GM12878 (cell line): ENCODE measurements at regions of chr13 and their contacts with region 1.

Region 1: GRCh38 chr13:46052319-46053161 is at the start of gene ZC3H13:
- DNase-seq: peak; percentile 69
- ATAC-seq: peak; percentile 97
- H3K4me3 ChIP-seq: peak within 1 kb of the TSS; percentile 95
- H3K27ac ChIP-seq: peak within 1 kb of the TSS; percentile 91
- H3K4me1 ChIP-seq: no peaks in the 10 kb centered on the region
- H3K27me3 ChIP-seq: no peaks in the 10 kb centered on the region
- CTCF ChIP-seq: peak; percentile 13 to 34 (median 32); a peak in 4 of 6 replicates
- EP300 ChIP-seq: no peak
- POLR2A ChIP-seq: peak; percentile 91
- RAD21 ChIP-seq: no peak; the same call in 1 of the 2 replicates
- polyA plus RNA-seq, gene ZC3H13: 18.7 to 23.4 TPM

Region 2: GRCh38 chr13:45915686-45916439 is 136.7 kb before region 1 on chr13:
- CTCF ChIA-PET with region 1: no interaction called
- POLR2A ChIA-PET with region 1: no interaction called
- RAD21 ChIA-PET with region 1: no interaction called
- SMC1A ChIA-PET with region 1: no interaction called
- in situ Hi-C with region 1: no loop called
- intact Hi-C with region 1: no loop called
- DNase-seq: no peak
- ATAC-seq: no peak
- H3K4me3 ChIP-seq: no peak overlapping the region
- H3K27ac ChIP-seq: no peak overlapping the region
- H3K4me1 ChIP-seq: no peaks in the 10 kb centered on the region
- H3K27me3 ChIP-seq: peaks cover 0 to 2% of the 10 kb centered on the region in 2 experiments; a peak in 2 of 4 replicates
- CTCF ChIP-seq: no peak
- EP300 ChIP-seq: no peak
- POLR2A ChIP-seq: no peak
- RAD21 ChIP-seq: no peak

Region 3: DNA sequence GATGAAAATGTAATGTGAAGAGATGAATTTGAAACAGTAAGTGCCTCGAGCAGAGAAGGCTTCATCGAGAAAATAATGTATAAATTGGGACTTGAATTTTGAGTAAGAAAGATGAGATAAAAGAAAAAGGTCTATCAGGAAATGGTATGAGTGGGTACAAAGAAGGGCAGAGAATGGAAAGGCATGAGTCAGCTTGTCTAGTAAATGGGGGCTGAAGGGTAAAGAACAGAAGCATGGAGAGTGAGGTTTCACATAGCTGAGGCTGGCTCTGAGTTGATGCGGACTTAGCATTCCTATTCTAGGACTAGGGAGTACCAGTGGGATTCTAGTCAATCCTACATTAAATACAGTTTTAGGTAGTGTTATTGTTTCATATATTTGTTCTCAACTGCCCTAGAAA is 85.8 kb before region 1 on chr13:
- CTCF ChIA-PET with region 1: no interaction called
- POLR2A ChIA-PET with region 1: no interaction called
- RAD21 ChIA-PET with region 1: no interaction called
- SMC1A ChIA-PET with region 1: no interaction called
- in situ Hi-C with region 1: no loop called
- intact Hi-C with region 1: no loop called
- DNase-seq: no peak
- ATAC-seq: no peak
- H3K4me3 ChIP-seq: no peak overlapping the region
- H3K27ac ChIP-seq: no peak overlapping the region
- H3K4me1 ChIP-seq: no peaks in the 10 kb centered on the region
- H3K27me3 ChIP-seq: no peaks in the 10 kb centered on the region
- CTCF ChIP-seq: no peak
- EP300 ChIP-seq: no peak
- POLR2A ChIP-seq: no peak
- RAD21 ChIP-seq: no peak

Region 4: GRCh38 chr13:46100191-46100815 is 47.8 kb after region 1 on chr13:
- CTCF ChIA-PET with region 1: no interaction called
- POLR2A ChIA-PET with region 1: no interaction called
- RAD21 ChIA-PET with region 1: no interaction called
- SMC1A ChIA-PET with region 1: interaction called, 4 read pairs
- in situ Hi-C with region 1: no loop called
- intact Hi-C with region 1: loop called (anchors 2 kb)
- DNase-seq: no peak
- ATAC-seq: peak; percentile 79
- H3K4me3 ChIP-seq: no peak overlapping the region
- H3K27ac ChIP-seq: peak overlapping the region; percentile 31
- H3K4me1 ChIP-seq: peaks cover 20% of the 10 kb centered on the region
- H3K27me3 ChIP-seq: no peaks in the 10 kb centered on the region
- CTCF ChIP-seq: no peak
- EP300 ChIP-seq: 0 out of 4 replicates have a peak, but pooled peaks of 1 of the 2 experiments have one; percentile 8
- POLR2A ChIP-seq: no peak
- RAD21 ChIP-seq: 0 out of 2 replicates have a peak, but pooled peaks have one; percentile 5

Region 5: GRCh38 chr13:46126552-46127357 is 74.2 kb after region 1 on chr13:
- CTCF ChIA-PET with region 1: interaction called, 3 read pairs
- POLR2A ChIA-PET with region 1: no interaction called
- RAD21 ChIA-PET with region 1: no interaction called
- SMC1A ChIA-PET with region 1: interaction called, 3 read pairs
- in situ Hi-C with region 1: no loop called
- intact Hi-C with region 1: loop called (anchors 5 kb)
- DNase-seq: no peak
- ATAC-seq: peak; percentile 77
- H3K4me3 ChIP-seq: no peak overlapping the region
- H3K27ac ChIP-seq: no peak overlapping the region
- H3K4me1 ChIP-seq: no peaks in the 10 kb centered on the region
- H3K27me3 ChIP-seq: no peaks in the 10 kb centered on the region
- CTCF ChIP-seq: peak; percentile 92 to 98 (median 92); a peak in 5 of 6 replicates
- EP300 ChIP-seq: no peak
- POLR2A ChIP-seq: peak; percentile 65
- RAD21 ChIP-seq: peak; percentile 88

Region 6: GRCh38 chr13:46168341-46168740 is 115.8 kb after region 1 on chr13:
- CTCF ChIA-PET with region 1: no interaction called
- POLR2A ChIA-PET with region 1: interaction called, 11 read pairs
- RAD21 ChIA-PET with region 1: no interaction called
- SMC1A ChIA-PET with region 1: no interaction called
- in situ Hi-C with region 1: no loop called
- intact Hi-C with region 1: no loop called
- DNase-seq: no peak
- ATAC-seq: peak; percentile 52
- H3K4me3 ChIP-seq: peak overlapping the region; percentile 72
- H3K27ac ChIP-seq: peak overlapping the region; percentile 85
- H3K4me1 ChIP-seq: peaks cover 65% of the 10 kb centered on the region
- H3K27me3 ChIP-seq: no peaks in the 10 kb centered on the region
- CTCF ChIP-seq: no peak
- EP300 ChIP-seq: no peak
- POLR2A ChIP-seq: peak; percentile 72
- RAD21 ChIP-seq: no peak

Region 7: GRCh38 chr13:46324976-46325375 is 272.4 kb after region 1 on chr13:
- CTCF ChIA-PET with region 1: no interaction called
- POLR2A ChIA-PET with region 1: no interaction called
- RAD21 ChIA-PET with region 1: no interaction called
- SMC1A ChIA-PET with region 1: no interaction called
- in situ Hi-C with region 1: no loop called
- intact Hi-C with region 1: no loop called
- DNase-seq: no peak
- ATAC-seq: no peak
- H3K4me3 ChIP-seq: no peak overlapping the region
- H3K27ac ChIP-seq: no peak overlapping the region
- H3K4me1 ChIP-seq: no peaks in the 10 kb centered on the region
- H3K27me3 ChIP-seq: no peaks in the 10 kb centered on the region
- CTCF ChIP-seq: no peak
- EP300 ChIP-seq: no peak
- POLR2A ChIP-seq: no peak
- RAD21 ChIP-seq: no peak

Region 8: DNA sequence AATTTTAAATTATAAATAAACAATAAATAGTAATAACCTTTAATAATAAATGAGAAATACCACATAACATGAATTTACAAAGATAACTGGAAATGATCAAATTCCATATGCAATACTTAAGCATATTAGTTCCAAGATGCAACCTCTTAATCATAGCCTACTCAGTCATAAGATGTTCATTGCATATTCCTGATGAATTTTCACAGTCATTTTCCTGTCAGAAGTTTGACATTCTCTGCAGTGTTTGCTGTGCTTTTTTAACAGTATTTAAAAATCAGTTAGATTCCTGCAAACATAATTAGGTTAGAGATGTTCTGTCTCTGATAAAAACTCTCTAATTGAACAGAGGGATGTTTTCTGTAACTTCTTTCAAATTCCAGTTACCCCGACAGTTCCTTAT is 872.9 kb after region 1 on chr13:
- CTCF ChIA-PET with region 1: no interaction called
- POLR2A ChIA-PET with region 1: no interaction called
- RAD21 ChIA-PET with region 1: no interaction called
- SMC1A ChIA-PET with region 1: no interaction called
- in situ Hi-C with region 1: no loop called
- intact Hi-C with region 1: no loop called
- DNase-seq: no peak
- ATAC-seq: no peak
- H3K4me3 ChIP-seq: no peak overlapping the region
- H3K27ac ChIP-seq: no peak overlapping the region
- H3K4me1 ChIP-seq: peaks cover 3% of the 10 kb centered on the region; the same call in 1 of the 2 replicates
- H3K27me3 ChIP-seq: no peaks in the 10 kb centered on the region
- CTCF ChIP-seq: no peak
- EP300 ChIP-seq: no peak
- POLR2A ChIP-seq: no peak
- RAD21 ChIP-seq: no peak